ENCODE measurements at regions of chr6 and their contacts with region 1.

Region 1: GRCh38 chr6:2848851-2849250 is 7.2 kb upstream of the SERPINB1 start:
- DNase-seq: no peak
- H3K4me3 ChIP-seq: no peak overlapping the region
- H3K27ac ChIP-seq: no peak overlapping the region
- H3K4me1 ChIP-seq: peaks cover 11% of the 10 kb centered on the region
- H3K27me3 ChIP-seq: no peaks in the 10 kb centered on the region
- CTCF ChIP-seq: no peak

Region 2: DNA sequence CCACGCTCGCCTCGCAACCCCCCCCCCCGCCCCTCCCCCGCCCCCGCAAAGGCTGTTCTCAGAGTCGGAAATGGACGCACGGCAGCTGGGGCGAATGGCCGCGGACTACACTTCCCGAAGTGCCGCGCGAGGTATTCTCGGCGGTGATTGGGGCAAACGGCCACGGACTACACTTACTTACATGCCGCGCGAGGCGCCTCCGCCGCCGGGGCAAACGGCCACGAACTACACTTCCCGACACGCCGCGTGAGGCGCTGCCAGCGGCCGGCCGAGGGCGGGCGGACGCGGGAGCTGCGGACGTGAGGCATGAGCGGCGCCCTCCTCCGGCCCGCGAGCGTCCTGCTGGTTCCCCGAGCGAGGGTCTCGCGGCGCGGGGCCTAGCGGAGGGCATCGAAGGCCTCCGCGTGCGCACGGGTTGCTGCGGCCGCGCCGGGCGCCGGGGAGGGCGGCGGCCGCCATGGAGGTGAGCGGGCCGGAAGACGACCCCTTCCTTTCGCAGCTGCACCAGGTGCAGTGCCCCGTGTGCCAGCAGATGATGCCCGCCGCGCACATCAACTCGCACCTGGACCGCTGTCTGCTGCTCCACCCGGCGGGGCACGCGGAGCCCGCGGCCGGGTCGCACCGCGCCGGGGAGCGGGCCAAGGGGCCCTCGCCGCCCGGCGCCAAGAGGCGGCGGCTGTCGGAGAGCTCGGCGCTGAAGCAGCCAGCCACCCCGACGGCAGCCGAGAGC is 83.5 kb before region 1 on chr6 and contains the start of gene WRNIP1:
- CTCF ChIA-PET with region 1: no interaction called
- dilution Hi-C with region 1: loop called (anchors 5 kb)
- in situ Hi-C with region 1: no loop called
- intact Hi-C with region 1: no loop called
- DNase-seq: peak; percentile 99
- H3K4me3 ChIP-seq: peak within 1 kb of the TSS; percentile 68 to 88 (median 82)
- H3K27ac ChIP-seq: peak within 1 kb of the TSS; percentile 94
- H3K4me1 ChIP-seq: peaks cover 32% of the 10 kb centered on the region
- H3K27me3 ChIP-seq: no peaks in the 10 kb centered on the region
- CTCF ChIP-seq: peak; percentile 33 to 53
- total RNA-seq, gene WRNIP1: 43.3 to 46.0 TPM

Region 3: DNA sequence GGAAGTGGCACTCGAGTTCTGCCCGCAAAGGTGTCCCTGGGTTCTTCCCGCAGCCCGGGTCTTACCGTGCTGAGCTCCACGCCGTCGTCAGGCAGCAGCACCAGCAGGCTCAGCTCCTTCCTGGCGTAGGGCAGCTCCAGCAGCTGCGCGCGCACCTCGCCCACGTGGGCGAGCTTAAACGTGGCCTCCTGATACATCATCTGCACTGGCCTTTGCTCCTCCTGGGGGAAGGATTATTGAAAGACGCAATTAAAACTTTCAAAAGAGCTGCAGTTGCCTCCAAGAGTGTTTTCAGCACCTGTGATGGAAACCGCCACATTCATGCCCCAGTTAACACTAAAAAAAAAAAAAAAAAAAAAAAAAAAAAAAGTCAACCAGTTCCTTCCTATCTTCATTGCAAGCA is 42.9 kb after region 1 on chr6:
- CTCF ChIA-PET with region 1: no interaction called
- dilution Hi-C with region 1: loop called (anchors 5 kb)
- in situ Hi-C with region 1: no loop called
- intact Hi-C with region 1: no loop called
- DNase-seq: no peak
- H3K4me3 ChIP-seq: no peak overlapping the region
- H3K27ac ChIP-seq: no peak overlapping the region
- H3K4me1 ChIP-seq: no peaks in the 10 kb centered on the region
- H3K27me3 ChIP-seq: peaks cover 3% of the 10 kb centered on the region
- CTCF ChIP-seq: no peak

Region 4: GRCh38 chr6:2911171-2911570 is 62.3 kb after region 1 on chr6:
- CTCF ChIA-PET with region 1: interaction called, 3 read pairs
- dilution Hi-C with region 1: no loop called
- in situ Hi-C with region 1: loop called in 1 of 2 experiments (anchors 10 kb)
- intact Hi-C with region 1: loop called (anchors 1 kb)
- DNase-seq: peak; percentile 25
- H3K4me3 ChIP-seq: no peak overlapping the region
- H3K27ac ChIP-seq: no peak overlapping the region
- H3K4me1 ChIP-seq: peaks cover 6% of the 10 kb centered on the region
- H3K27me3 ChIP-seq: no peaks in the 10 kb centered on the region
- CTCF ChIP-seq: no peak

Region 5: GRCh38 chr6:2921520-2922115 is 72.8 kb after region 1 on chr6:
- CTCF ChIA-PET with region 1: no interaction called
- dilution Hi-C with region 1: loop called (anchors 5 kb)
- in situ Hi-C with region 1: loop called in 1 of 2 experiments (anchors 10 kb)
- intact Hi-C with region 1: no loop called
- DNase-seq: no peak
- H3K4me3 ChIP-seq: no peak overlapping the region
- H3K27ac ChIP-seq: no peak overlapping the region
- H3K4me1 ChIP-seq: no peaks in the 10 kb centered on the region
- H3K27me3 ChIP-seq: no peaks in the 10 kb centered on the region
- CTCF ChIP-seq: no peak

Region 6: DNA sequence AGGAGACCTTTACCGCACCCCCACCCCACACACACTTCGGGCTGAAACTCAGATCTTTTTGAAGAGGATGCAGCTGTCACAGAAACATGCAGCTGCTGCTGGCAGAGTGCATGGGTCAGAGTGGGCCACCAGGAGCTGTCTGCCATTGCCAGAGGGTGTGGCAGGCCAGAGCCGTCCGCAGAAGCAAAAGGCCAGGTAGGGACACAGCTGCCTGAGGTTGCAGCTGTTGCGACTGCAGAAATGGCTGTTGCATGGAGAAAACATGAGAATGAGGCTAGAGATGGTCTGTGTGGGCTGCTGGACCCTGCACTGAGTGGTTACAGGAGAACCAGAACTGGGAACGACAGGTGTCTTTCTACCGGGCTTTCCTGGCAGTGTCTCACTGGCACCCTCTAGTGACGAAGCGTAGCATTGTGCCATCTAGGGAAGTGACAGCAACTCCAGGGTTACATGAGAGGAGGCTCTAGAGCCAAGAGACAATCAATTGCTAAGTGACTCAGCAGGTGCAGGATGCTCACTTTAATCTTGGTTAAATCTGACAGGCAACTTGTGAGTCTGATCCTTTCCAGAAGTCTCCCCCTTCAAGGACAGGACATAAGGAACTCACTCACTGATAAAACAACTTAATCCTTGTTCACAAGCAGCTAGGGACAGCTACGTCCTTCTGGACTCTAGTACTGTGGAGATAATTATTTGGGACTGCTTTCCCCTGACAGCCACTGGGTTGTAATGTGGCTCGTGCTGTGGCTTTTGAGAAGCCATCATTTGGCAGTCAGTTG is 83.3 kb after region 1 on chr6:
- CTCF ChIA-PET with region 1: interaction called, 9 read pairs
- dilution Hi-C with region 1: no loop called
- in situ Hi-C with region 1: loop called in 1 of 2 experiments (anchors 10 kb)
- intact Hi-C with region 1: loop called (anchors 1 kb)
- DNase-seq: peak; percentile 73
- H3K4me3 ChIP-seq: no peak overlapping the region
- H3K27ac ChIP-seq: no peak overlapping the region
- H3K4me1 ChIP-seq: no peaks in the 10 kb centered on the region
- H3K27me3 ChIP-seq: peaks cover 3% of the 10 kb centered on the region
- CTCF ChIP-seq: peak; percentile 98 to 99

Region 7: DNA sequence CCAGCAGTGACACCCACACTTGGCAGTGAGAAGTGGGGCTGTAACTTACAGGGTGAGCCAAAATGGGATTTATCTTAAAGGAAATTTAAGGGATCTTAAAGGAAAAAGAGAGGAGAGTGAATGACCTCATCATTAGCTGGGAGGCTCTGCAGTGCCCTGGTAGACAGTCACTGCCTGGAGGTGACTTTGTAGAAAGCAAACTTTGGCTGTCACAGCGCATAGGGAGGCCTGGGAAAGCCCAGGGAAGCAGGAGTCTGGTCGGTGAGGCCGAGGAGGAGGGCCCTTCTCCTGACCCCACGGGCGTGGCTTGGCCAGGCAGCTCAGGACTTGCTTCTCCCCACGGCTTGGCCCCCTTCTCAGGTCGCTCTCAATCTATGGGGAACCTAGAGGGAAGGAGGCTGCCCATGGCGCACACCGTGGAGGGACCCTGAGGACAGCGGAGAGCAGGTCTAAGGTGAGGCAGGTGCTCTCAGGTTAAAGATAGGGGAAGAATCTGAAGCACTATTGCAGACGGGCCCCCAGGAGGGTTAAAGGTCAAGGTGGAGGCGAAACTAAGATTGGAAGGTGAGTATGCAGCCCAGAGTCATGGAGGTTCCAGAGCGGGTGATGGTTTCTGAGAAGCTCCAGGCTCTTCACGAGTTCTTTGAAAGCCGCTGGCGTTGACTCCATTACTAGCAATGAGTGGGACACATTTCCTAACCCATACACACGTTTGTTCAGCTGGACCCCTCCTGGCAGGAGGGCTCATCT is 203.8 kb after region 1 on chr6:
- CTCF ChIA-PET with region 1: no interaction called
- dilution Hi-C with region 1: no loop called
- in situ Hi-C with region 1: no loop called
- intact Hi-C with region 1: loop called (anchors 5 kb)
- DNase-seq: no peak
- H3K4me3 ChIP-seq: no peak overlapping the region
- H3K27ac ChIP-seq: no peak overlapping the region
- H3K4me1 ChIP-seq: no peaks in the 10 kb centered on the region
- H3K27me3 ChIP-seq: no peaks in the 10 kb centered on the region
- CTCF ChIP-seq: no peak

Measured in mammary epithelial cell (primary cell).